Esophagus muscularis mucosa (tissue), 4 donors: ENCODE measurements at regions of chr6 and their contacts with region 1.

Region 1: GRCh38 chr6:39543095-39543494 is 182.1 kb downstream of the KIF6 start:
- DNase-seq: peak; percentile 93
- H3K4me3 ChIP-seq: no peak overlapping the region
- H3K27ac ChIP-seq: peak overlapping the region; percentile 70 to 72 (median 70)
- H3K4me1 ChIP-seq: peaks cover 5 to 47% (median 32%) of the 10 kb centered on the region in 4 donors
- H3K27me3 ChIP-seq: no peaks in the 10 kb centered on the region
- CTCF ChIP-seq: no peak
- EP300 ChIP-seq: no peak
- POLR2A ChIP-seq: no peak

Region 2: GRCh38 chr6:39653612-39654011 is 110.5 kb after region 1 on chr6:
- intact Hi-C with region 1: no loop called
- DNase-seq: no peak
- H3K4me3 ChIP-seq: no peak overlapping the region
- H3K27ac ChIP-seq: no peak overlapping the region
- H3K4me1 ChIP-seq: no peaks in the 10 kb centered on the region
- H3K27me3 ChIP-seq: no peaks in the 10 kb centered on the region
- CTCF ChIP-seq: no peak
- EP300 ChIP-seq: no peak
- POLR2A ChIP-seq: no peak

Region 3: GRCh38 chr6:39804466-39805065 is 261.5 kb after region 1 on chr6:
- intact Hi-C with region 1: loop called (anchors 10 kb)
- DNase-seq: no peak
- H3K4me3 ChIP-seq: peak overlapping the region in 1 of 4 donors; percentile 17
- H3K27ac ChIP-seq: peak overlapping the region; percentile 58 to 97 (median 73)
- H3K4me1 ChIP-seq: peaks cover 29 to 100% (median 97%) of the 10 kb centered on the region in 4 donors
- H3K27me3 ChIP-seq: no peaks in the 10 kb centered on the region
- CTCF ChIP-seq: no peak
- EP300 ChIP-seq: peak; percentile 36
- POLR2A ChIP-seq: no peak